ENCODE measurements at regions of chr1 and their contacts with region 1.

Region 1: DNA sequence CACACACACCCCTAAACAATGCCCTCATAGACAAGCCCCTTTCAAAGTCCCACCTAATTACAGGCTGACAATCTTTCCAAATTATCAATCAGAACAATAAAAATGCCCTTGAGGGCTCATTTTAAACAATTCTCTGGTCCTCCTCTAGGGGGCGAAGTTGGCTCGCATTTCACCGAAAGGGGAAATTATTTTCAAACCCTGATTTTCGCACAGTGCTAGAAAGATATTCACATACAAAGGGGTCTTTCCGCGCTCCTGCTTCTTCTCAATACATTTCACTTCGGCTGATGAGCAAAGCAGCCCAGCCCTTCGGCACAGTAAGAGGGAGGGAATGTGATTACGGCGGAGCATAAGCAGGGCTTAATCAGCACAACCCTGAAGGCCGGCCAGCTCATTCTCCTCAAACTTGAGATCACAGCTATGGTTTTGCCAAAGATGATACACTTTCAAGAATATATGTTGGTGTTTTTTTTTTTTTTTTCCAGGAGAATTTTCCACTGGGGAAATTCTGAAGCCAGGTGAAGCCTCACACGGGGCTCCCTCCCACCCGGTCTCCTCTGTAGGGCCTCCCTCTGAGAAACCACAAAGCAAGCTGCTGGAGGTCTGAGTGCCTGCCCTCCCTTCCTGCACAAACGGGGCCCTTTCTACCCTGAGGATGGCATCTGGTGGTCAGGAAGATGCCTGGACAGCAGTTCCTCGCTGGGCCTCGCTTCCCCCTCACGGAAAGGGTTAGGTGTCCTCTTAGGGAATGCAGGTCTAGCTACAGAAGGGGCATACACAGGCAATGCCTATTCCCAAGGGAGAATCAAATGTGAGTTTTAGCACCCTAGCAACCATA is 66.9 kb downstream of the GNG12 start:
- DNase-seq: no peak
- ATAC-seq: peak; percentile 69
- H3K4me3 ChIP-seq: no peak overlapping the region
- H3K27ac ChIP-seq: no peak overlapping the region
- H3K4me1 ChIP-seq: peaks cover 7% of the 10 kb centered on the region
- H3K27me3 ChIP-seq: peaks cover 0 to 3% of the 10 kb centered on the region in 2 experiments; a peak in 2 of 4 replicates
- CTCF ChIP-seq: peak; percentile 65 to 76 (median 76)
- EP300 ChIP-seq: no peak
- POLR2A ChIP-seq: no peak
- RAD21 ChIP-seq: peak; percentile 85

Region 2: DNA sequence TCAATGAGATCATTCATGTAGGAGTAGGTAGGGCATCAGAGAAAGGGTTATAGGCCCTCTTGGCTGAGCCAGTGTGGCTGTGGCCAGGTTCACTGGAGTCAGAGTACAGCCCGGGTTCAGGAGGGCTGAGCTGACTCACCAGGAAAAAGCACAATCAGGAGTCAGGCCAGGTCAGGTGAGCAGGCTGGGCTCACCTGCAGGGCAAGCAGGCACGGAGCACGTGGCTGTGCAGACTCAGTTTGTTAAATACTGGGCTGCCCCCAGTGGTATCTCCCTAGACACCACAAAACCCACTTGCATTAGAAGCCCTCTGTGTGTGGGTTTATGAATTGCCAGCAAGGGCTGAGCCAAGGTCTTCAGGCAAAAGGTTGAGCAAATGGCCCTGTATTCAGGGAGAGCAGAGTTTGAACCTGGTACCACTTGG is 214.0 kb before region 1 on chr1:
- CTCF ChIA-PET with region 1: interaction called, 227 read pairs
- POLR2A ChIA-PET with region 1: no interaction called
- RAD21 ChIA-PET with region 1: interaction called, 45 read pairs
- SMC1A ChIA-PET with region 1: interaction called, 205 read pairs
- in situ Hi-C with region 1: loop called (anchors 5 kb)
- intact Hi-C with region 1: no loop called
- DNase-seq: no peak
- ATAC-seq: peak; percentile 71
- H3K4me3 ChIP-seq: no peak overlapping the region
- H3K27ac ChIP-seq: no peak overlapping the region
- H3K4me1 ChIP-seq: no peaks in the 10 kb centered on the region
- H3K27me3 ChIP-seq: no peaks in the 10 kb centered on the region; a peak in 1 of 4 replicates
- CTCF ChIP-seq: no peak
- EP300 ChIP-seq: no peak
- POLR2A ChIP-seq: no peak
- RAD21 ChIP-seq: no peak

Region 3: DNA sequence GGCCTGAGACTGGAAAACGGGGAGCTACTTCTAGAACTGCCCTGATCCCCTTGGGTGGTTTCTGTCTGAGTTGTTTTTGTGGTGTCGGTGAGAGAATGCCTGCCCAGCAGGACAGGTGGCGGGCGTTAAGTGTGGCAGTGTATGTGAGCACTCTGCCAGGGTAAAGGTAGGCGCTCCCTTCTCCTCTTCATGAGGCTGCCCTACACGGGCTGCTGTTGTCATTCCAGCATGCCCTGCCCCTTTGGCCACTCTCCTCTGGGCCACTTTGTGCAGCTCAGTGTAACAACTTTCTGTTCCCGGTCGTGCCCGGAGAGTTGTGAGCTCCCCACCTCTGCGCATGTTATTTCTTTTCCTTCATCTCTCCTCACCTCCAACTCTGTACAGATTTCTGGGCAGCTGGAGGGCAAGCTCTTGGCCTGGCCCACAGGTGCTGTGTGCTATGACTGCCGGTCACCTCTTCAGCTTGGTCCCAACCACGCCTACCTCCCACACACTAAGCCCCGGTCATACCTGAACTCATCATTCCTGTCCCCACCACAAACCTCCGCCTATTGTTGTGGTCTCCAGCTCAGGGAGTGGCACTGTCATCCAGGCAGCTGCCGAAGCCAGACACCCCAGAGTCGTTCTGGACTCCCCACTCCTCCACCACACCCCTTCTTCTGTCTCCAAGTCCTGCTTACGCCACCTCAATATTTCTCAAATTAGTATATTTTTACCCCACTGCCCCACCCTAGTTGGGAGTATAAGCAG is 12.4 kb before region 1 on chr1:
- CTCF ChIA-PET with region 1: interaction called, 39 read pairs
- POLR2A ChIA-PET with region 1: interaction called, 4 read pairs
- RAD21 ChIA-PET with region 1: interaction called, 23 read pairs
- SMC1A ChIA-PET with region 1: interaction called, 20 read pairs
- in situ Hi-C with region 1: no loop called
- intact Hi-C with region 1: no loop called
- DNase-seq: no peak
- ATAC-seq: peak; percentile 72
- H3K4me3 ChIP-seq: no peak overlapping the region
- H3K27ac ChIP-seq: no peak overlapping the region
- H3K4me1 ChIP-seq: peaks cover 27% of the 10 kb centered on the region
- H3K27me3 ChIP-seq: no peaks in the 10 kb centered on the region
- CTCF ChIP-seq: no peak
- EP300 ChIP-seq: 0 out of 4 replicates have a peak, but pooled peaks of 1 of the 2 experiments have one; percentile 36
- POLR2A ChIP-seq: no peak
- RAD21 ChIP-seq: no peak

Region 4: DNA sequence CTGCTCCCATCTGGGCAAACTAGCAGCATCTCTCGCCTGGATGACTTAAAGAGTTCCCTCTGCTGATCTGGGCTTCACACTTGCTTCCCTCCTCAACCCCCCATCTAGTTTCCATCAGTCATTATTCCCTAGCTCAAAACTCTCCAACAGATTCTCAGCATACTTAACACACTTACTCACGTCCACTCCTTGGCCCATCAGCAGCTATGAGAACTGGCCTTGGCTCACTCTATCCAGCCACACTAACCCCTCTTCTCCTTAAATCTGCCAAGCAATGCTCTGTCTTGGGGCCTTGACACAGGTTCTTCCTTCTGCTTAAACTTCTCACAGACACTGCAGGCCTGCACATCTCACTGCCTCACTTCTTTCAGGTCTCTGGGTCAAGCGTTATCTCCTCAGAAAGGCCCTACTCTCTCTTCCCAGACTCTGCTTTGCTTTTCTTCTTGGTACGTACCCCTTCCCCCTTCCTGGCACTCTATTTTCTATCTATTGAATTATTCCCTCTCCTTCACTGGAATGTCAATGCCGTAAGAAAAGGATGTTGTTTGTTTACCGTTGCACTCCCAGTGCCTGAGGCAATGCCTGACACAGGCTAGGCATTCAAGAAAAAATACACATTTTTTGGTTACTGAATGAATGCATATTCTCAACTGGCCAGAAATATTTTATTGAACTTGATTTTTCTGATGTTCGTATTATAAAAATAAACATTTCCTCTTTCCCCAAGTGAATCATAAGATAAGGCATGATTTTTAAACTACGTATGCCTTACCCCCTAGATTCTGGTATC is 25.5 kb after region 1 on chr1:
- CTCF ChIA-PET with region 1: interaction called, 36 read pairs
- POLR2A ChIA-PET with region 1: interaction called, 15 read pairs
- RAD21 ChIA-PET with region 1: interaction called, 73 read pairs
- SMC1A ChIA-PET with region 1: interaction called, 232 read pairs
- in situ Hi-C with region 1: no loop called
- intact Hi-C with region 1: no loop called
- DNase-seq: no peak
- ATAC-seq: no peak
- H3K4me3 ChIP-seq: no peak overlapping the region
- H3K27ac ChIP-seq: no peak overlapping the region
- H3K4me1 ChIP-seq: no peaks in the 10 kb centered on the region
- H3K27me3 ChIP-seq: no peaks in the 10 kb centered on the region; a peak in 2 of 4 replicates
- CTCF ChIP-seq: no peak
- EP300 ChIP-seq: no peak
- POLR2A ChIP-seq: no peak
- RAD21 ChIP-seq: no peak

Region 5: DNA sequence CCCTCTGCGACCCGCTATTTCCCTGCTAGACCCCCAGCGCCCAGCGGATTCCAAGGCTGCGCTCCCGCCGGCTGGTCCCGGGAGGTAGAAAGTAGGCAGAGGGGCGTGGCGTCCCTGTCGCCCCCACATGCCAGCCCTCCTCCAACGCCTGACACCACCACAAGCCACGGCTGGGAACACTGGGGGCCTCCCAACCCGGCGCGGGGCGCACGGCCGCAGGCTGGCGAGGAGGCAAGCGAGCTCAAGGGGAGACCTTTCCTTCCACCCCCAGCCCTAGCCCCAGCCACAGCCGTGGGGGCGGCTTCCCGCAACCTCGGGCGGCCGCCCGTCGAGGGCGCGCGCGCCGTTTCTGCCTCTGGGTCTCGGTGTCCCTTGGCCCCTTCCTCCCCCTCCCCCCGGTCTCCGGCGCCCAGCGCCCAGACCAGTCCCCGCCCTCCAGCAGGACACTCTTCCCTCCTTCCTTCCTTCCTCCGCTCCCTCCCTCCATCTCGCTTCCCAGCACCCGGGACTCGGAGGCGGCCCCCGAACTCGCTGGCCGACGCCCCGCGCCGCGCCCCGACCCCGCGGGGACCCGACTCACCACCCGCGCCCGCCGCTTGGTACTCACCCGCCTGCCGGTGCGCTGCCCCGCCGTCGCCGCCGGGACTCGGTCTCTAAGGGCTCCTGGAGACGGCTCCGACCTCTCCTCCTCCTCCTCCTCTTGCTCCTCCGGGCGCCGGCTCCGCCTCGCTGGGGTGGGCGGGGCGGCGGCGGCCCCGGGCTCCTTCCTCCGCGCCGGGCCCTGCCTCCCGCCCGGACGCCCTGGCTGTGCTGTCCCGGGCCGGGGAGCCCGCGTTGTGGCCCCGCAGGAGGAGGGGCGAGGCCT is 66.6 kb after region 1 on chr1 and contains the start of gene GNG12:
- CTCF ChIA-PET with region 1: interaction called, 298 read pairs
- POLR2A ChIA-PET with region 1: interaction called, 36 read pairs
- RAD21 ChIA-PET with region 1: interaction called, 320 read pairs
- SMC1A ChIA-PET with region 1: interaction called, 1,058 read pairs
- in situ Hi-C with region 1: no loop called
- intact Hi-C with region 1: loop called (anchors 5 kb)
- DNase-seq: no peak
- ATAC-seq: peak; percentile 78
- H3K4me3 ChIP-seq: no peak within 1 kb of the TSS
- H3K27ac ChIP-seq: no peak within 1 kb of the TSS
- H3K4me1 ChIP-seq: no peaks in the 10 kb centered on the region
- H3K27me3 ChIP-seq: peaks cover 6 to 11% of the 10 kb centered on the region in 2 experiments; a peak in 3 of 4 replicates
- CTCF ChIP-seq: no peak
- EP300 ChIP-seq: no peak
- POLR2A ChIP-seq: no peak
- RAD21 ChIP-seq: no peak
- polyA plus RNA-seq, gene GNG12: 0.22 to 0.27 TPM

Region 6: GRCh38 chr1:68010090-68010489 is 243.7 kb after region 1 on chr1:
- CTCF ChIA-PET with region 1: interaction called, 54 read pairs
- POLR2A ChIA-PET with region 1: interaction called, 4 read pairs
- RAD21 ChIA-PET with region 1: interaction called, 30 read pairs
- SMC1A ChIA-PET with region 1: interaction called, 37 read pairs
- in situ Hi-C with region 1: no loop called
- intact Hi-C with region 1: loop called (anchors 1 kb)
- DNase-seq: no peak
- ATAC-seq: no peak
- H3K4me3 ChIP-seq: no peak overlapping the region
- H3K27ac ChIP-seq: no peak overlapping the region
- H3K4me1 ChIP-seq: no peaks in the 10 kb centered on the region
- H3K27me3 ChIP-seq: no peaks in the 10 kb centered on the region
- CTCF ChIP-seq: peak in 1 of 3 experiments; percentile 6; a peak in 1 of 6 replicates
- EP300 ChIP-seq: no peak
- POLR2A ChIP-seq: no peak
- RAD21 ChIP-seq: no peak

Region 7: DNA sequence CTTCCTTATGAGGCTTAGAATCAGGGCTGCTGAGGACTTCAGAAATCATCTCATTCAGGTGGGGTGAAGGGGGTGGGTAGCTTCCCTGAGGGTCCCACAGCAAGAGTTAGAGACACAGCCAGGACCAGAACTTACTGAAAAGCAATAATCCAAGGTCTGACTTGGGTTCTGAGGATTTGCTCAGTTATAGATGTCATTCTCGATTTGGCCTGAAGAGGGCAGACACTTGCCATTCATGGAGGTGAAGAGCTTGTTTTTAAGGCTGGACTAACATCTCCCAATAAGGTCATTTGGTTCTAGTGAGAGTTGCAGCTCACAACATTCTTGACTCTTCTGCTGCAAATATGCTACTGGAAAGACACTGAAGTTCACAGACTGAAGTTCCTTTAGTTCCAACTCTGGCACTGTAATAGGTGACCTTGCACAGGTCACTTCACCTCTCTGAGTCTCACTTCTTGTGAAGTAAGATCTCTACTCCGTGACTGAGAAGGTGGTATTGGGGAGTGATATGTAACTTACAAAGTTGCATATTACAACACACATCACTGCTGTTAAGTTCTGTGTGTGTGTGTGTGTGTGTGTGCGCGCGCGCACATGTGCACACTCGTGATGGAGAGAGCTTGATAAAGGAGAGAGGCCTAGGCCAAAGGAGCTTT is 353.9 kb after region 1 on chr1:
- CTCF ChIA-PET with region 1: interaction called, 64 read pairs
- POLR2A ChIA-PET with region 1: interaction called, 6 read pairs
- RAD21 ChIA-PET with region 1: interaction called, 26 read pairs
- SMC1A ChIA-PET with region 1: interaction called, 56 read pairs
- in situ Hi-C with region 1: no loop called
- intact Hi-C with region 1: loop called (anchors 5 kb)
- DNase-seq: peak; percentile 24
- ATAC-seq: peak; percentile 81
- H3K4me3 ChIP-seq: no peak overlapping the region
- H3K27ac ChIP-seq: no peak overlapping the region
- H3K4me1 ChIP-seq: no peaks in the 10 kb centered on the region
- H3K27me3 ChIP-seq: no peaks in the 10 kb centered on the region
- CTCF ChIP-seq: peak; percentile 69 to 82 (median 75)
- EP300 ChIP-seq: no peak
- POLR2A ChIP-seq: no peak
- RAD21 ChIP-seq: peak; percentile 91

Measured in GM12878 (cell line).